Activated T-helper 2 cell treated with anti-CD3 and anti-CD28 coated beads, Interferon-gamma antibody, Interleukin-2, Interleukin-4, amounts not matched to agents 10 μg/mL and 5 μg/mL and 100 μg/mL, durations not matched to agents 14 hours and 24 hours and 36 hours (primary cell): ENCODE measurements at regions of chr15 and their contacts with region 1.

Region 1: DNA sequence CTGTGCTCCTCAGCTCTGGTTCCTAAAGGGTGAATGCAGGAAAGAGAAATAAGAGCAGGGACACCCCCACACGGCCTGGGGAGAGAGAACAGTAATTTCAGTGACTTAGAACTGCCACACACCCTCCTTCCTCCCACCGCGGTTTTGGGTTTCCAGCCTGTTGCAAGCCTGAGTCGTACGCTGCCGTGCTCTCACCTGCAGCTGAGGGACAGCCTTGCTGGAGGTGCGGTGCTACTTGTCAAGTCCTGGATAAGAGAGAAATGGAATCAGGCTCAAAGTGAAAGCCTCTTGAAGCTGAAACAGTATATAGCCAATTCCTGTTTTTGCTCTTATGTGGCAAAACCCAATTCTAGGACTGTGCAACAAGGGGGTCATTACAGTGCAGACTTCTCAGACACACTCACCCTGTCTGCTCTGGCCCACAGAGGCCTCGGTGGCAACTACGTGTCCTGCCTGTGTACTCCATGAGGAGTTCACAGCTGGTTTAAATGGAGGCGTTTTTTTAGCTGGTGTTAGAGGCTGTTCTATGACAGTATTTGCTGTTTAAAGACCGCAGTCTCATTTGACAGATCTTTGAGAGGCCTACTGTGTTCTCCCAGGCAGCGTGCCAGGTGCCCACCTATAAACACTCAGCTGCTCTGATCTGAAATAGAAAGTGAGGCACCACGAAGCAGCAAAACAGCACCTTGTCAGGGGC is 42.9 kb downstream of the TBC1D2B start:
- DNase-seq: peak; percentile 70
- H3K4me3 Mint-ChIP-seq: peak overlapping the region; percentile 57
- H3K27ac Mint-ChIP-seq: peak overlapping the region; percentile 81
- H3K4me1 Mint-ChIP-seq: peaks cover 76% of the 10 kb centered on the region
- H3K27me3 Mint-ChIP-seq: no peaks in the 10 kb centered on the region

Region 2: DNA sequence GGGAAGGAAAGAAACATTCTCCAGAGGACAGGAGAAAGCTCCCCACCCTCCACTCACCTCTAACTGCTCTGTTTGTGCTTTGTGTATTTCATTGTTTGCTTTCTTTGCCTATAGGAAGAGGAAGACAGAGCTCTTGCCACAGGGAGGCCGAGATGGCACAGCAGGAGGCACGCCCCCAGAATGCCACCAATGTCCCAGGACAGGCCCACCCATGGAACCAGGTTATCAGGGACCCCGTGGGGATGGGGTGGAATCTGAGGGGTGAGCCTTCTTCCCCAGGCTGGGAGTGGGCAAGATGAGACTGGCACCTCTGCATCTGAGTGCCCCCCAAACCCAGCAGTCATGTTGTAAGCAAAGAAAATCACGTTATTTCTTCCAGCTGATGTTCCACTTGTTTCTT is 113.0 kb before region 1 on chr15:
- intact Hi-C with region 1: no loop called
- DNase-seq: no peak
- H3K4me3 Mint-ChIP-seq: no peak overlapping the region
- H3K27ac Mint-ChIP-seq: no peak overlapping the region
- H3K4me1 Mint-ChIP-seq: no peaks in the 10 kb centered on the region
- H3K27me3 Mint-ChIP-seq: peaks cover 18% of the 10 kb centered on the region

Region 3: GRCh38 chr15:78049691-78050440 is 15.2 kb after region 1 on chr15:
- intact Hi-C with region 1: loop called (anchors 1 kb)
- DNase-seq: peak; percentile 57
- H3K4me3 Mint-ChIP-seq: peak overlapping the region; percentile 72
- H3K27ac Mint-ChIP-seq: peak overlapping the region; percentile 98
- H3K4me1 Mint-ChIP-seq: peaks cover 93% of the 10 kb centered on the region
- H3K27me3 Mint-ChIP-seq: no peaks in the 10 kb centered on the region